CD4-positive, alpha-beta memory T cell (primary cell): ENCODE measurements at regions of chr3 and their contacts with region 1.

Region 1: GRCh38 chr3:185764163-185764979 is 60.5 kb downstream of the IGF2BP2 start:
- DNase-seq: no peak
- H3K4me3 ChIP-seq: no peak overlapping the region
- H3K4me3 Mint-ChIP-seq: no peak overlapping the region
- H3K27ac ChIP-seq: no peak overlapping the region
- H3K27ac Mint-ChIP-seq: no peak overlapping the region
- H3K4me1 ChIP-seq: no peaks in the 10 kb centered on the region
- H3K4me1 Mint-ChIP-seq: no peaks in the 10 kb centered on the region
- H3K27me3 ChIP-seq: peaks cover 7% of the 10 kb centered on the region
- H3K27me3 Mint-ChIP-seq: peaks cover 22 to 37% of the 10 kb centered on the region in 2 donors

Region 2: GRCh38 chr3:185724761-185725160 is 39.6 kb before region 1 on chr3:
- CTCF ChIA-PET with region 1: no interaction called
- POLR2A ChIA-PET with region 1: no interaction called
- intact Hi-C with region 1: no loop called
- DNase-seq: no peak
- H3K4me3 ChIP-seq: no peak overlapping the region
- H3K4me3 Mint-ChIP-seq: no peak overlapping the region
- H3K27ac ChIP-seq: no peak overlapping the region
- H3K27ac Mint-ChIP-seq: no peak overlapping the region
- H3K4me1 ChIP-seq: no peaks in the 10 kb centered on the region
- H3K4me1 Mint-ChIP-seq: no peaks in the 10 kb centered on the region
- H3K27me3 ChIP-seq: no peaks in the 10 kb centered on the region
- H3K27me3 Mint-ChIP-seq: peaks cover 2 to 14% of the 10 kb centered on the region in 2 donors

Region 3: DNA sequence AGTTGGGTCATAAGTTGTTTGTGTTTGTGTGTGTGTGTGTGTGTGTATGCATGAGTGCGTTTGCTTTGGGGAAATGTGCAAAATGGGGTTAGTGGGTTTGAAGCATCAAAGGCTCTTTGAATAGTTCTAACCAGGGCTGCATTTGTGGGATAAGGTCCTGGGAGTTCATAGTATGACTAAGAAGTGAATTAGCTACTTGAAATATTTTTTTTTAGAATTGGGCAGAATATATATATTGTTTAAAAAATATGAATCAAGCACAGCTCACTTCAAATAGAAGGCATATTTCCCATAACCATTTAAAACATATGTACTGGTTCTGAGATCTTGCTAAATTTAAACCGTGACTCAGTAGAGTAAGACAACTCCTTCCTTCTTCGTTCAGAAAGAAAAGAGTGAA is 17.4 kb after region 1 on chr3:
- CTCF ChIA-PET with region 1: interaction called, 15 read pairs
- POLR2A ChIA-PET with region 1: no interaction called
- intact Hi-C with region 1: no loop called
- DNase-seq: no peak
- H3K4me3 ChIP-seq: no peak overlapping the region
- H3K4me3 Mint-ChIP-seq: no peak overlapping the region
- H3K27ac ChIP-seq: no peak overlapping the region
- H3K27ac Mint-ChIP-seq: no peak overlapping the region
- H3K4me1 ChIP-seq: no peaks in the 10 kb centered on the region
- H3K4me1 Mint-ChIP-seq: no peaks in the 10 kb centered on the region
- H3K27me3 ChIP-seq: no peaks in the 10 kb centered on the region
- H3K27me3 Mint-ChIP-seq: peaks cover 9 to 13% of the 10 kb centered on the region in 2 donors